Transverse colon (tissue), 4 donors: ENCODE measurements at regions of chr10 and their contacts with region 1.

Region 1: GRCh38 chr10:125350519-125350918 is 190.2 kb upstream of the CTBP2 start:
- DNase-seq: no peak
- H3K4me3 ChIP-seq: no peak overlapping the region
- H3K27ac ChIP-seq: no peak overlapping the region
- H3K4me1 ChIP-seq: no peaks in the 10 kb centered on the region
- H3K27me3 ChIP-seq: no peaks in the 10 kb centered on the region
- CTCF ChIP-seq: no peak
- EP300 ChIP-seq: no peak
- POLR2A ChIP-seq: no peak

Region 2: GRCh38 chr10:125238682-125239081 is 111.8 kb before region 1 on chr10:
- in situ Hi-C with region 1: no loop called
- intact Hi-C with region 1: loop called (anchors 1 kb)
- DNase-seq: no peak
- H3K4me3 ChIP-seq: no peak overlapping the region
- H3K27ac ChIP-seq: no peak overlapping the region
- H3K4me1 ChIP-seq: no peaks in the 10 kb centered on the region
- H3K27me3 ChIP-seq: no peaks in the 10 kb centered on the region
- CTCF ChIP-seq: no peak
- EP300 ChIP-seq: no peak
- POLR2A ChIP-seq: no peak

Region 3: DNA sequence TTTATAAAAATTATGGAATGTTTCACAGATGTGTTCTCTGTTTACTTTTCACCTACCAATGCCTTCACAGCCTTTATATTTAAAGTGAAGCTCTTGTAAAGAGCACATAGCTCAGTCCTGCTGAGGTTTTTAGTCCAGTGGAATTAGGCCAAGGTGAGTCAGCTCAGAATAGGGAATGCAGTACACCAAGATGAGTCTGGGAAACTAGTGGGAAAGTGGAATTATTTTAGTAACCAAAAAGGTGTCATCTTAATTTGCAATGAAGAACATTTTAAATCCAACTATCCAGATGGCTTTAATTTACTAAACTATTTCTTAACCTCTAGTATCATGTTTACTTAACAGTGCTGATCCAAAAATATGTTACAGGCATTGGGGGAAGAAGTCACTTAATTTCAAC is 46.2 kb after region 1 on chr10:
- in situ Hi-C with region 1: no loop called
- intact Hi-C with region 1: no loop called
- DNase-seq: no peak
- H3K4me3 ChIP-seq: no peak overlapping the region
- H3K27ac ChIP-seq: no peak overlapping the region
- H3K4me1 ChIP-seq: no peaks in the 10 kb centered on the region
- H3K27me3 ChIP-seq: no peaks in the 10 kb centered on the region
- CTCF ChIP-seq: no peak
- EP300 ChIP-seq: no peak
- POLR2A ChIP-seq: no peak